Right cardiac atrium (tissue), 5 donors: ENCODE measurements at regions of chr1 and their contacts with region 1.

Region 1: DNA sequence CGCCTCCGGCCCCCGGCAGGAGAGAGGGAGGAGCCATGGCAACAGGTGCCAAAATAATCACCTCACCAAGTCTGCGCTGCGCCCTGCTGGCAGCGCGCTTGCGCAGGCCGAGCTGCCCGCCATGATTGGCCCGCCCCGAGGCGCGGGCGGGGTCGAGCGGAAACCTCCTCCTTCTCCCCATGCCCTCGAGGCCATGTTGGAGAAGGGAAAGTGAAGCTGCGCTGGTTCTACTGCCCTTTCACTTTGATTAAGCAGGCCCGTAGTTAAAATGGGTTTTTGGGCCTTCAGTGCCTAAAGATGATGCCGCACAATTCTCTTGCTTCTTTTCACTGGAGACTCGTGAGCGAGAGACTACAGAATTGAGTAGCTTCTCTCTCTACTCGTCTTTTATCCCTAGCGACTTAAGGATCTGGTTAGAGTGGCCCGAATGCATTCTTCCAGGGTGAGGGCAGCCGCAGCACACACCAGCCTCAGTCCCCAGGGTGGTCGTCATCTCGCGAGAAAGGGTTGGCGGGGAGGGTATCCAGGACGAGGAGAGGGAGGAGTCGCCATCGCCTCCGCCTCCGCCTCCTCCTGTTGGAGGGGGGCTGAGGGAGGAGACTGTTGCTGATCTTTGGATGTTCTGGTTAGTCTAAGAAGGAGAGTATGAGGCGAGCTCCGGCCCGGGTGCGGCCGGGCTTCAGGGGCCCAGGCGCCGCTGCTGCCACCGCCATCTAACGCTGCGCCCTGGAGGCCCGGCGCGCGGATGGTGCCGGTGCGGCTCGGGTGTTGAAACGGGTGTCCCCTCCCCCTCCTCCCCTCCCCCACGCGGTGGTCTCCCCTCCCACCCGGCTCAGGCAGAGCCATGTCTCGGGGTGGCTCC is at the start of gene DCAF6:
- DNase-seq: peak; percentile 97 to 99 (median 99)
- ATAC-seq: peak; percentile 95 to 96
- H3K4me3 ChIP-seq: peak within 1 kb of the TSS; percentile 85
- H3K27ac ChIP-seq: peak within 1 kb of the TSS; percentile 90
- H3K4me1 ChIP-seq: no peaks in the 10 kb centered on the region
- H3K27me3 ChIP-seq: no peaks in the 10 kb centered on the region
- total RNA-seq, gene DCAF6: 157 to 192 (median 182) TPM

Region 2: GRCh38 chr1:168045311-168045710 is 109.0 kb after region 1 on chr1:
- intact Hi-C with region 1: loop called in 1 of 4 experiments (anchors 10 kb)
- DNase-seq: no peak
- ATAC-seq: no peak
- H3K4me3 ChIP-seq: no peak overlapping the region
- H3K27ac ChIP-seq: no peak overlapping the region
- H3K4me1 ChIP-seq: no peaks in the 10 kb centered on the region
- H3K27me3 ChIP-seq: no peaks in the 10 kb centered on the region